ENCODE measurements at regions of chr11 and their contacts with region 1.

Region 1: DNA sequence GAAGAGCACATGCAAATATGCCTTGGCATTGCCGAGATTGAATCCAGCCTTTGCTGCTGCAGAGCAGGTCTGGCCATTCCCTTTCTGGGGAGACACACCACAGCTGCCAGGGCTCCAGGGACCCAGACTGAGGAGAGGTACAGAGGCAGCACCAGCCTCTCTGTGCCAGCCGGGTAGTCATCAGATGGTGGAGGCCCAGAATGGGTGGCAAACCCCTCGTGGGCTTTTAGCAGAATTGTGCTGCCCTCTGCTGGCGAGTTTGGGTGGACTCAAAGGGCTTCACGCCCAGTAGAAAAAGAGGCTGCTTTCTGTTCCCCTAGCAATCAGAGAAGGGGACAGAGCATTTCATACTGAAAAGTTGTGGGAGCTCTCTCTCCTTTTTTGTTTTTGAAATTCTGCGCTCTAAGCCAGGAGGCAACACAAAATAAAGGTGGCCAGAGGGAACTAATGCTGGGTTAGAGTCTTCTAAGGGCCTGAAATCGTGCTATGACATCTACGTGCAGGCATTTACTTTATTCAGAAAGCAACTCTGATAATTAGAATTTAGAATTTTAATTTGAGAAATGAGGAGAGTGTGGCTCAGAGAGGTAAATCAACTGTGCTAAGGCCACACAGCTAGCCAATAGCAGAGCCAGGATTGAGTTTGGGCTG is 158.8 kb upstream of the NAV2 start:
- DNase-seq: peak; percentile 70 to 92 (median 87)
- H3K4me3 ChIP-seq: no peak overlapping the region
- H3K27ac ChIP-seq: peak overlapping the region in 20 of 59 donors; percentile 0 to 75 (median 32)
- H3K27me3 ChIP-seq: peaks cover 0 to 9% (median 0%) of the 10 kb centered on the region in 45 donors
- CTCF ChIP-seq: peak; percentile 82 to 99 (median 97)

Region 2: DNA sequence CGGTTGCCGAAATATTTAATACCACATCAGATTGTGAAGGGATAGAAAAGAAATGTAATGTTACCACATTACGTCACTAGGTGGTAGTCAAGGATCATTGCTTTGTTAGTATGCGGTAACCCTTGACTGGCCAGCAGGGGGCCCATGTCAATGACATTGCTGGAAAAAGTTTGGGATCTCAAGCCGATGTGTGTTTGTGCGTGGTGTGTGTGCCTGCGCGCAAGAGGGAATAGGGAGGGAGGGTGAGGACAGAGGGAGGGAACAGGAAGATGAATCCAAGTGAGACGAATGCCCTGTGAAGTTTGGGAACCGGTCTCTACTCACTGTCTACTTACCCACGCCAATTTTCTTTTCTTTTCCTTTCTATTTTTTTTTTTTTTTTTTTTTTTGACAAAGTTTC is 482.6 kb before region 1 on chr11:
- intact Hi-C with region 1: loop called (anchors 1 to 2 kb)
- DNase-seq: peak in 9 of 10 donors; percentile 25 to 75 (median 58)
- H3K4me3 ChIP-seq: peak overlapping the region in 14 of 59 donors; percentile 4 to 35 (median 20)
- H3K27ac ChIP-seq: no peak overlapping the region
- H3K27me3 ChIP-seq: peaks cover 0 to 31% (median 3%) of the 10 kb centered on the region in 45 donors
- CTCF ChIP-seq: peak; percentile 60 to 98 (median 90)

Region 3: GRCh38 chr11:19101796-19102520 is 451.9 kb before region 1 on chr11:
- intact Hi-C with region 1: no loop called
- DNase-seq: no peak
- H3K4me3 ChIP-seq: no peak overlapping the region
- H3K27ac ChIP-seq: no peak overlapping the region
- H3K27me3 ChIP-seq: peaks cover 0 to 7% (median 0%) of the 10 kb centered on the region in 45 donors
- CTCF ChIP-seq: no peak

Region 4: GRCh38 chr11:19259487-19260345 is 294.1 kb before region 1 on chr11:
- intact Hi-C with region 1: loop called (anchors 5 kb)
- DNase-seq: peak; percentile 30 to 86 (median 75)
- H3K4me3 ChIP-seq: peak overlapping the region in 31 of 59 donors; percentile 2 to 51 (median 24)
- H3K27ac ChIP-seq: no peak overlapping the region
- H3K27me3 ChIP-seq: no peaks in the 10 kb centered on the region
- CTCF ChIP-seq: peak; percentile 74 to 98 (median 94)

Region 5: GRCh38 chr11:19326499-19326898 is 227.3 kb before region 1 on chr11:
- intact Hi-C with region 1: loop called (anchors 5 kb)
- DNase-seq: no peak
- H3K4me3 ChIP-seq: no peak overlapping the region
- H3K27ac ChIP-seq: no peak overlapping the region
- H3K27me3 ChIP-seq: peaks cover 0 to 5% (median 0%) of the 10 kb centered on the region in 45 donors
- CTCF ChIP-seq: peak in 48 of 56 donors; percentile 8 to 60 (median 34)

Region 6: DNA sequence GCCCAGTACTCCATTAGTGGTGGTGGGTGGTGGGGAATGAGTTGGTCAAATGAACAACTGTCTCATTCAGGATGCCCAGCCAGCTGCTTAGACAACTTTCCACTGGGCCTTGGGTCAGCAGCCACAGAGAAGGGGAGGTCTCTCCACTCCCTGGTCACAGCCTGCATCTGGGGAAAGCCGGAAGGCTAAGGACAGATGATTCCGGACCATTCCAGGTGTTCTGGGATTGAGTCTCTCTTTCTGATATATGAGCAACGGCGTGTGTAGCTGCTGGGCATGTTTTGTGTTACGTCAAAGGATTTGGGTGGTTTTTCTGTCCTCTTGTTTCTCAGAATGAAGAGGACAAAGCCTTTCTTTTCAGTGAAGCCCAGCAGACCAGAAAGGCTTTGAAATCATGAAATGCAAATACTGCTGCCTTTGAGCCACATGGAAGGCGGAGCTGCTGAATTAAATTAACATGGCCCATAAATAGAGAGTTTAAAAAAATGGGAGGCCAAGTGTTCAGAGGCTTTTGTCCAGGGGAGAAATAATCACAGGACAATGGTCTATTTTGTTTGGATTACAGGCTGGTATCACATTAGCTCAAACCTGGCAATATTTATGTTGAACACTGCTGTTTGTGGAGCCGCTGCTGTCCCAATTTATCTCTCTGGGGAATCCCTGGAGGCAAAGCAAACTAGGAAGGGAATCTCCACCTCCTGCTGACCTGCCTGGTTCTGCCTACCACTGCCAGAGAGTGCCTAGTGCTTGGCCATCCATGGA is 78.7 kb before region 1 on chr11:
- intact Hi-C with region 1: loop called (anchors 5 kb)
- DNase-seq: peak in 9 of 10 donors; percentile 39 to 81 (median 65)
- H3K4me3 ChIP-seq: peak overlapping the region in 29 of 59 donors; percentile 2 to 49 (median 20)
- H3K27ac ChIP-seq: peak overlapping the region in 58 of 59 donors; percentile 40 to 97 (median 89)
- H3K27me3 ChIP-seq: no peaks in the 10 kb centered on the region
- CTCF ChIP-seq: peak in 4 of 56 donors; percentile 4 to 29 (median 8)

Region 7: DNA sequence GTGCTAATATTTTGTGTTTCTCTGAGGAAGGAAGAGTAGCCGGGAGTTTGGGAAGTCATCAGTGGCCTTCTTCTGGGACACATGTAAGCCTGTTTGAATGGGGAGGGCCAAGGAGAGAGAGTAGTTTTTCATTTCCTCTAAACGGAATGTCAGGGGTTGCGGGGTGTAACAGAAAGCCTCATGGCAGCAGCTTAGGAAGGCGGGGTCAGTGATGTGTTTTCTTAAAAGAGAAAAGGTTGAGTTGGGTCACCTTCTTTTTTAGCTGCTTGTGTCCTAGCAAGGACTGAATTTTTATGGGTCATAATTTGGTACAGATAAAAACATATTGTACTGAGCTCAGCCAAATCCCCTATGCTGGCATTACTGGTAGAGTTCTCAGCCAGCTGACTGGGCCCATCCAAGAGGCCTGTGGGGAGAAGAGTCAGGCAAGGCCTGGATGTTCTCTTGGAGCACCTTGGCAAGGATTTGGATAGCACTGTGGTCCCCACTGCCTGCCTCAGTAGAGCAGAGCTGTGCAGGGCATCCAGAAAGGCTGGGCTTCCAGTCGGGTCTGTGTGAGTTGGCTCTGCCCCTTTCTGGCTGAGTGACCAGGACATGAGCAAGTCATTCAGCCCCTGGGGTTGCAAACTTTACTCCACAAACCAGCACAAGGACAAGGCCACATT is 129.5 kb after region 1 on chr11:
- intact Hi-C with region 1: no loop called
- DNase-seq: peak in 1 of 10 donors; percentile 89
- H3K4me3 ChIP-seq: no peak overlapping the region
- H3K27ac ChIP-seq: peak overlapping the region in 8 of 59 donors; percentile 11 to 43 (median 26)
- H3K27me3 ChIP-seq: no peaks in the 10 kb centered on the region
- CTCF ChIP-seq: no peak

Measured in dorsolateral prefrontal cortex (tissue), 120 donors.